ENCODE measurements at regions of chr19 and their contacts with region 1.

Region 1: GRCh38 chr19:45569619-45570421 is 14.8 kb downstream of the OPA3 start:
- DNase-seq: peak; percentile 80
- H3K4me3 Mint-ChIP-seq: no peak overlapping the region
- H3K27ac Mint-ChIP-seq: peak overlapping the region; percentile 59
- H3K4me1 Mint-ChIP-seq: peaks cover 14% of the 10 kb centered on the region
- H3K27me3 Mint-ChIP-seq: no peaks in the 10 kb centered on the region

Region 2: GRCh38 chr19:45523642-45524256 is 46.1 kb before region 1 on chr19:
- CTCF ChIA-PET with region 1: no interaction called
- intact Hi-C with region 1: loop called (anchors 1 kb)
- DNase-seq: peak; percentile 82
- H3K4me3 Mint-ChIP-seq: no peak overlapping the region
- H3K27ac Mint-ChIP-seq: peak overlapping the region; percentile 55
- H3K4me1 Mint-ChIP-seq: peaks cover 18% of the 10 kb centered on the region
- H3K27me3 Mint-ChIP-seq: no peaks in the 10 kb centered on the region

Region 3: GRCh38 chr19:45547211-45547800 is 22.5 kb before region 1 on chr19:
- CTCF ChIA-PET with region 1: no interaction called
- intact Hi-C with region 1: no loop called
- DNase-seq: no peak
- H3K4me3 Mint-ChIP-seq: no peak overlapping the region
- H3K27ac Mint-ChIP-seq: no peak overlapping the region
- H3K4me1 Mint-ChIP-seq: peaks cover 7% of the 10 kb centered on the region
- H3K27me3 Mint-ChIP-seq: no peaks in the 10 kb centered on the region